PC-9 (cell line): ENCODE measurements at regions of chr17 and their contacts with region 1.

Region 1: DNA sequence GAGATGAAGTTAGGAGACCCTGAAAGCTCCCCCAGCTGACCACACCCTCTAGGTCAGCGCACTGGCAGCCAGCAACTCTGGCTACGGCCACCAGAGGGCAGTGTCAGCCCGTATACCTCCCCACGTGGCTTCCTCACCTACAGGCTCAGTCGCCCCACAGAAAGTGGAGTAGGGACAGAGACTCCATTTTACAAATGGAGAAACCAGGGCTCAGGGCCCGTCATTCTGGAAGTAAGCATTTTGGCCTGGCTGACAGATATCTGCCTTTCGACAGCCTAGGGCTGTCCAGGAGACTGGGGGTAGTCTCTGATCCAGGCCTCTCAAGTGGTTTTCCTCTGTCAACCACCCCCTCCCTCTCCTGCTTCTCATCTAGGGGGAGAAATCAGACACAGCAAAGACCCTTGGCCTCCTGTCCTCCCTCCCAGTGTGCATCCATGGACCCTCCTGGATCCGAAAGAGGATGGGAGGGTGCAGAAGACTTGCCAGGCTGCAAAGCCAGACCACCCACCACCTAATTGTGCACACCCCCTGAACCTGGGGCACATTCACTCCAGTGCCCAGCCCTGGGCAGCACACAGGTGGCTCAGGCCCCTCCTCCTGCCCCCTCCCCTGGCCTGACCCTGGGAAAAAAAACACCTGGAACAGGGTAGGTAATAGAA is 3.8 kb upstream of the HAP1 start:
- DNase-seq: peak; percentile 56 to 79
- H3K4me3 ChIP-seq: no peak overlapping the region
- H3K27ac ChIP-seq: 0 out of 2 replicates have a peak overlapping the region, but pooled peaks have one; percentile 11
- H3K4me1 ChIP-seq: peaks cover 42% of the 10 kb centered on the region
- H3K27me3 ChIP-seq: peaks cover 22% of the 10 kb centered on the region; the same call in 1 of the 2 replicates
- CTCF ChIP-seq: peak; percentile 97

Region 2: DNA sequence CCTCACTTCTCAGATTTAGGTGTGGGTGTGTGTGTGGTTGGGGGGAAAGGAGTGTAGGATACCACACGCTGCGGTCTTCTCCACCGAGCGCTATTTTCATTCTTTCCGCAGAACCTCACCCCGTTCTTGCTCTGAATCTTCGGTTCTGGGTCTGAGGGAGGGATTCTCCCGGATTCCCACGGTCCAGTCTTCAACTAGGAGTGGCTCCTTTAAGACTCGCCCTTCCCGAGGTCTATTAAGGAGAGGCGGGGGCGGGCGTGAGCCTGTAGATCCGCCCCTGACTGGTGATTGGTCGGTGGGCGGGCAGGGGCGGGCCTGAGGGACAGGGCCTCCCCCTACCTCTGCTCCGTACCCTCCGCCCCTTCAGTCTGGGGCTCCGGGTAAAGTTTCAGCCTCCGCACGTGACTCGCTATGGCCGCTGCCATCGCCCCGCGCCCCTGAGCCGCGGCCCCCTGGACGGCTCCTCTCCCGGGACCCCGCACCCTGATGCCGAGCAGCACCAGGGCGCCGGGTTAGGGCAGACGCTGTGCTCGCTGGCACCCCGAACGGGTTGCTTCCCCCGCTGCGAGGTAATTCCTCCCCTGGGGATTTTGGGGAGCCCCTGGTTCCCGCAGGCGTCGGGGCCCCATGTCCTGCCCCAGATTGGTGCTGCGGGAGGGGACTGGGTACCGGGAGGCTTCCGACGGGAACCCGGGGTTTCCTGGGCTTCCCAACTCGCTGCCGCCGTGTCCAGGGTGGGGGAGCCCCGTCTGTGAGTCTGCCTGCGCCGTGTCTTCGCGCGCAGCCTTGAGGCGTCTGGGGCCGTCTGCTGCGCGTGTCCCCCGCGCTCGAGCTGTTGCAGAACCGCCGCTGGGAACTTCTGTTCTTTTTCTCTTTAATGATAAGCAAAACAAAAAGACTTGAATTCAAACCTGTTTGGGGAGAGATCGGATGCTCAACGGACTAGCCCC is 1420.1 kb before region 1 on chr17:
- CTCF ChIA-PET with region 1: no interaction called
- POLR2A ChIA-PET with region 1: interaction called, 28 read pairs
- intact Hi-C with region 1: no loop called
- DNase-seq: peak; percentile 88 to 90
- H3K4me3 ChIP-seq: peak overlapping the region; percentile 99
- H3K27ac ChIP-seq: peak overlapping the region; percentile 75
- H3K4me1 ChIP-seq: peaks cover 85% of the 10 kb centered on the region
- H3K27me3 ChIP-seq: no peaks in the 10 kb centered on the region
- CTCF ChIP-seq: no peak

Region 3: DNA sequence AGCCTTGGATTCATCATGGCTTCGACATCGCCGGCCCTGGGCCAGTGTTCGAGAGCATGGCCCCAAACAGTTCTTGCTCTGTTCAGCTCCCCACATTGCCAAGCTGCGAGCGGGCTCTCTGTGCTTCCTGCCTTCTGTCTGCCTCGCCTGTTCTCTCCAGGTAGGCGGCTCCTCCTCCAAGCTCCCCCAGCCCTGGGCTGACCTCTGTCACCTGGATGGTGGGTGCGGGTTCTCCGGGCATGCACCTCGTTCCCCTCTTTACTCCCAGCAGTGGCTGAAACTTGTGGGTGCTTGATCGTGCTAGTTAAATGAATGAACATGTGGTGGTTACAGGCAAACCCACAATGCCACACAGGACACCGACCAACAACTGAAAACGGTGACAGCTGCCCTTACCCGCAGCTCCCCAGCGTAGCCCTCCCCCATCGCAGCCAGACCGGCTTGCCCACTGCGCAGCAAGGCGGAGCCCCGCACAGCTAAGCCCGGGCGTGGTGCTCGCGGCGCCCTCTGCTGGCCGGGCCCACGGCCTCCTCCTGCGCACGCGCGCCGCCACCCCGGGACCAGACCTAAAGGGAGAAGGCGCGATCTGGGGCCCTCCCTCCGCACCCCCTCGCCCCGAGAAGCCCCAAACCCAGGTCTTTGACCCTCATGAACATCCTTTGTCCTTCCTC is 72.5 kb before region 1 on chr17:
- CTCF ChIA-PET with region 1: no interaction called
- POLR2A ChIA-PET with region 1: no interaction called
- intact Hi-C with region 1: no loop called
- DNase-seq: peak; percentile 75 to 90
- H3K4me3 ChIP-seq: peak overlapping the region; percentile 46; the same call in 1 of the 2 replicates
- H3K27ac ChIP-seq: peak overlapping the region; percentile 29; the same call in 1 of the 2 replicates
- H3K4me1 ChIP-seq: peaks cover 26% of the 10 kb centered on the region
- H3K27me3 ChIP-seq: no peaks in the 10 kb centered on the region
- CTCF ChIP-seq: peak; percentile 91

Region 4: GRCh38 chr17:41786227-41787020 is 48.2 kb after region 1 on chr17 and contains the start of gene JUP:
- CTCF ChIA-PET with region 1: no interaction called
- POLR2A ChIA-PET with region 1: interaction called, 3 read pairs
- intact Hi-C with region 1: loop called (anchors 5 kb)
- DNase-seq: peak; percentile 100
- H3K4me3 ChIP-seq: peak within 1 kb of the TSS; percentile 63
- H3K27ac ChIP-seq: peak within 1 kb of the TSS; percentile 98
- H3K4me1 ChIP-seq: peaks cover 39% of the 10 kb centered on the region
- H3K27me3 ChIP-seq: no peaks in the 10 kb centered on the region
- CTCF ChIP-seq: peak; percentile 77
- total RNA-seq, gene JUP: 259 TPM in 2 replicates

Region 5: GRCh38 chr17:41864836-41865595 is 126.8 kb after region 1 on chr17 and contains the start of gene KLHL11:
- CTCF ChIA-PET with region 1: no interaction called
- POLR2A ChIA-PET with region 1: no interaction called
- intact Hi-C with region 1: loop called (anchors 10 kb)
- DNase-seq: peak; percentile 66 to 84
- H3K4me3 ChIP-seq: peak within 1 kb of the TSS; percentile 87
- H3K27ac ChIP-seq: peak within 1 kb of the TSS; percentile 44
- H3K4me1 ChIP-seq: peaks cover 16% of the 10 kb centered on the region
- H3K27me3 ChIP-seq: no peaks in the 10 kb centered on the region
- CTCF ChIP-seq: no peak
- total RNA-seq, gene KLHL11: 13.3 and 14.5 TPM in 2 replicates

Region 6: DNA sequence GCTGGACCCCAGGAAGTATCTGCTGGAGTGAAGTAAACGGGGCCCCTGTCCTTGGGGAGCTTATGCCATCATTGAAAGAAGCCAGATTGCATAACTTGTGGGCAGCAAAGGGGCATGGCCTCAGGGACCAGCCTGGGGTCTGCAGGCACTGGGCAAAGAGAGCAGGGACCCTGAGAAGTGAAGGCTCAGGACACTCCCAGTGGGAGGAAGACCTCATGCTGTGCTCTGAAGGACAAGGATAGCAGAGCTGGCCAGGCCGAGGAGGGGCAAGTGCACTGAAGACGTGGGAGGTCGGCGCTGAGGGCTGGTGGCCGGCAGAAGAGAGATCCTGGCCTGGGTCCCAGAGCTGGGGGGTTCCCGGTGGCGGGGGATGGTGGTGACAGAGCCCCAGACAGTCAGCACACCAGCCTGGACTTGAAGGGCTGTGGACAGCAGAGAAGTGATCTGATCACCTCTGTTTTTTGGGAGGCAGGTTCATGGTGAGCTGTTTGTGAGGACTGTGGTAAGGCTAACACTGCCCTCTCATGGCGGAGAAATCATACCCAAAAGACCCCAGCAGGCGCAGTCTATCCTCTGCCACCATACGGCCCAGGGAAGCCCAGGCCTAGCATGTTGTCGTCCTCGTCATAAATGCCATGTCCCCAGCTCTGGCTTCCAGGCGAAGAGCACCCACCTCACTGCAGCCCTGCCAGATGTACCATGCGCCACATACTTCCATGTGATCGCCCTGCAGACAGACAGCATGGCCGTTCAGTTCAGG is 221.3 kb after region 1 on chr17:
- CTCF ChIA-PET with region 1: no interaction called
- POLR2A ChIA-PET with region 1: no interaction called
- intact Hi-C with region 1: loop called (anchors 2 kb)
- DNase-seq: peak; percentile 36 to 47
- H3K4me3 ChIP-seq: no peak overlapping the region
- H3K27ac ChIP-seq: no peak overlapping the region
- H3K4me1 ChIP-seq: no peaks in the 10 kb centered on the region
- H3K27me3 ChIP-seq: no peaks in the 10 kb centered on the region
- CTCF ChIP-seq: peak; percentile 67